Tibial artery (tissue), 4 donors: ENCODE measurements at regions of chr15 and their contacts with region 1.

Region 1: DNA sequence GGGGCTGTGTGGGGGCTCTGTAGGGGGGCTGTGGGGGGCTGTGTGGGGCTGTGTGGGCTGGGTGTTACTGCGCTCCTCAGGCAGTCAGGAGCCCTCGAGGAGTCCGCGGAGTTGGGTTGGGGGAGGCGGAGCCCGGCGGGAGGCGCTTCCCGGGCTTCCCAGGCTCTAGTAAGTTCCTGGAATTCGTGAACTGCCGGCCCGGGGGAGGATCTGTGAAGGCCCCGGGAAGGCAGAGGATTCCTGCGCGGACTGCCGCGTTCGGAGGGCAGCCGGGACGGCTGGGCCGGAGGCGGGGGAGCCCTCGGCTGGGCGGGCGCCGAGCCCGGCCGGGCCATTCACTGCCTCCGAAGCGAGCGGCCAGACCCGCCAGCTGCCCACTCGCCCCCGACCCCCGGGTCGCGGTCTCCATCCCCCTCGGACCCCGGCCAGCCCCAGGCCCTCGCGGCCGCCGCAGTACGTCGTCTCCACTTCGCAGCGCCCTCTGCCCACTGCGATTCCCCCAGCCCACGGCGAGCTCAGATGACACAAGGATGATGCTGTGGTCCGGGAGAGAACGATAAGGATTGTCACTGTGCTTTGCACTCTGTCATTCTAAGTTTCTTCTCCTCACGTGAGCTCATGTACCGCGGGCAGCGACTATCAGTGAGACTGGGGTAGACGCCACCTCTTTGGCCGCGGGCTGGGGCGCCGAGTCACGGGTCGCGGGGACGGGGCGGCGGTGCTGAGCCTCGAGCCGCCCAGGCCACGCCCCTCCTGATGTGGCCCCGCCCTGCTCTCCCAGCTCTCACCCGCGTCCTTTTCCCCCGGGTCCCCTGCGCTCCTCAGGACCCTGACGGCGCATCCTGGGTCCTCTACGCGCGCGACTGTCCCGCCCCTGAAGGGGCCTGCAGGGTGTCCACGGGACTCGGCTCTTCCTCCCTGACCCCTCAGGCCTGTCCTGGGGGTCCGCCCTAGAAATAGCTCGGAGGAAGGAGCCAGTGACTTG is 65.3 kb downstream of the KLF13 start:
- DNase-seq: peak; percentile 93 to 96
- H3K4me3 ChIP-seq: peak overlapping the region; percentile 80 to 85
- H3K27ac ChIP-seq: peak overlapping the region; percentile 98 to 99
- H3K4me1 ChIP-seq: peaks cover 0 to 47% (median 25%) of the 10 kb centered on the region in 4 donors
- H3K27me3 ChIP-seq: no peaks in the 10 kb centered on the region
- CTCF ChIP-seq: no peak

Region 2: DNA sequence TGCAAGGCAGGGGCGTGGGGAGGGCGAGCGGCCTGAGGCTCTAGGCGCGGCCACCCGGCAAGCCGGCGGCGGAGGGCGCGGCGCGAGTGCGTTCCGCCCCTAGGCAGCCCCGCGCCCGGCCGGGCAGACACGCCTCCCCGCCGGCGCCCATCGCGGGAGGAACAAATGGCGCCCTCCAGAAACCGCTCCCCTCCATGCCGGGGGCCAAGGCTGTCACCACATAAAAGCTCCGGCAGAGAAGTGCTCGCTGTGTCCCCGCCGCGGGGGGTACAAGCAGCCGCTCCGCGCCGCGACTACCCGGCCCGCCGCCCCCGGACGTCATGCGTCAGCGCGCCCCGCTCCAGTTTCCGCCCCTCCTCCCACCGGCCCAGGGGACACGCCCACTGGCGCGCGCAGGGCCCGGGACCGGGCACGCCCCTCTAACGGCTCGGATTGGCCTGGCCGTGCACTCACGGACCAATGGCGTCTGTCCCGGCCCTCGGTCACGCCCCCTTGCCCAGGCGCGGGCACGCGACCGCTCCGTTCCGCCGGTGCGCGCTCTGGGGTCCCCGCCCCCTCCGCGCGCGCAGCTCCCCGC is 65.7 kb before region 1 on chr15:
- intact Hi-C with region 1: loop called (anchors 1 kb)
- DNase-seq: peak; percentile 96 to 99
- H3K4me3 ChIP-seq: peak overlapping the region; percentile 66 to 89
- H3K27ac ChIP-seq: peak overlapping the region; percentile 91 to 98
- H3K4me1 ChIP-seq: peaks cover 0 to 37% (median 24%) of the 10 kb centered on the region in 4 donors
- H3K27me3 ChIP-seq: no peaks in the 10 kb centered on the region
- CTCF ChIP-seq: no peak